PC-9 (cell line): ENCODE measurements at regions of chr11 and their contacts with region 1.

Region 1: DNA sequence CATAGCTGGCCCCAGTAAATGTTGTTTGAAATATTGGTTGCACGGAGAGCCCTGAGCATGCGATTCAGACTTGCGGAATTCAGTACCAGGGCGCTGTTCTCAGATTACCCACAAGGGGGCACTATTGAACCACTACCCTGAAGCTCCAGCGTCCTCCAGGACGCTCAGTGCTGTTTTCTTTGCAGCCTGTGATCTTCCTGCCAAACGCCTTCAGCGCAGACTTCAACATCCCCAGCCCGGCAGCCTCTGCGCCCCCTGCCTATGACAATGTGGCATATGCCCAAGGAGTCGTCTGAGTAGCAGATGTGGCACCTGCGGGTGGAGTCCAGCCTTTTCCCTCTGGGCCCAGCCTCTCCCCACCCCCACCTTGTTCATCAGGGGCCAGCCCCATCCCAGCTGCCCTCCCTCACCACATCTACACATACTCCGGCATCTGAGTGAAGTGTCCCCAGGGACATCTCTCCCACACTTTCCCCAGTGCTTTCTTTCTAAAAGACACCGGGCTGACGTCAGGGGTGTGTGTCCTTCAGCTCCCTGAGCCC is 9.6 kb upstream of the MS4A10 start:
- DNase-seq: peak; percentile 70 to 87
- H3K4me3 ChIP-seq: no peak overlapping the region
- H3K27ac ChIP-seq: no peak overlapping the region
- H3K4me1 ChIP-seq: no peaks in the 10 kb centered on the region
- H3K27me3 ChIP-seq: peaks cover 43% of the 10 kb centered on the region
- CTCF ChIP-seq: peak; percentile 90

Region 2: DNA sequence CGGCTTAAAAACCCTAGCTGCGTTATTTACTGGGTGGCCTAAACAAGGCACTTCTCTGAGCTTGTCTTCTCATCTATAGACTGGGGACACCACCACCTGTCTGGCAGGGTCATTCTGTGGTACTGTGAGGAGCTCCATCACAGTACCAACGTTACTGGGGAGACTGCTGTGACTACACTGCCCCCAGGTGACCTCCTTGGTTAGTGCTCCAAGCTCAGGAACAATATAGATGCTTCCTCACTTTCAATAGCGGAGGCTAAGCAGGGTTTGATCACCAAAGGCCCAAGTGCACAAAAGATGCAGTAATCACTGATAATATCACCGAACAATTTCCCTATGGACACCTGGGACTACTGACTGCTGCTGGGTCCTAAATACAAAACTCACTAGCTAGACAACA is 112.1 kb after region 1 on chr11:
- CTCF ChIA-PET with region 1: no interaction called
- POLR2A ChIA-PET with region 1: no interaction called
- intact Hi-C with region 1: loop called (anchors 1 kb)
- DNase-seq: no peak
- H3K4me3 ChIP-seq: no peak overlapping the region
- H3K27ac ChIP-seq: no peak overlapping the region
- H3K4me1 ChIP-seq: no peaks in the 10 kb centered on the region
- H3K27me3 ChIP-seq: no peaks in the 10 kb centered on the region
- CTCF ChIP-seq: peak; percentile 67

Region 3: GRCh38 chr11:61173456-61173855 is 398.0 kb after region 1 on chr11:
- CTCF ChIA-PET with region 1: no interaction called
- POLR2A ChIA-PET with region 1: no interaction called
- intact Hi-C with region 1: loop called (anchors 2 kb)
- DNase-seq: peak; percentile 35 to 86
- H3K4me3 ChIP-seq: no peak overlapping the region
- H3K27ac ChIP-seq: no peak overlapping the region
- H3K4me1 ChIP-seq: no peaks in the 10 kb centered on the region
- H3K27me3 ChIP-seq: peaks cover 24% of the 10 kb centered on the region
- CTCF ChIP-seq: peak; percentile 66

Region 4: GRCh38 chr11:61384271-61385242 is 609.1 kb after region 1 on chr11:
- CTCF ChIA-PET with region 1: interaction called, 5 read pairs
- POLR2A ChIA-PET with region 1: no interaction called
- intact Hi-C with region 1: loop called (anchors 5 kb)
- DNase-seq: no peak
- H3K4me3 ChIP-seq: no peak overlapping the region
- H3K27ac ChIP-seq: no peak overlapping the region
- H3K4me1 ChIP-seq: peaks cover 4% of the 10 kb centered on the region
- H3K27me3 ChIP-seq: no peaks in the 10 kb centered on the region
- CTCF ChIP-seq: no peak